Kidney (tissue), 22 donors: ENCODE measurements at regions of chr11 and their contacts with region 1.

Region 1: DNA sequence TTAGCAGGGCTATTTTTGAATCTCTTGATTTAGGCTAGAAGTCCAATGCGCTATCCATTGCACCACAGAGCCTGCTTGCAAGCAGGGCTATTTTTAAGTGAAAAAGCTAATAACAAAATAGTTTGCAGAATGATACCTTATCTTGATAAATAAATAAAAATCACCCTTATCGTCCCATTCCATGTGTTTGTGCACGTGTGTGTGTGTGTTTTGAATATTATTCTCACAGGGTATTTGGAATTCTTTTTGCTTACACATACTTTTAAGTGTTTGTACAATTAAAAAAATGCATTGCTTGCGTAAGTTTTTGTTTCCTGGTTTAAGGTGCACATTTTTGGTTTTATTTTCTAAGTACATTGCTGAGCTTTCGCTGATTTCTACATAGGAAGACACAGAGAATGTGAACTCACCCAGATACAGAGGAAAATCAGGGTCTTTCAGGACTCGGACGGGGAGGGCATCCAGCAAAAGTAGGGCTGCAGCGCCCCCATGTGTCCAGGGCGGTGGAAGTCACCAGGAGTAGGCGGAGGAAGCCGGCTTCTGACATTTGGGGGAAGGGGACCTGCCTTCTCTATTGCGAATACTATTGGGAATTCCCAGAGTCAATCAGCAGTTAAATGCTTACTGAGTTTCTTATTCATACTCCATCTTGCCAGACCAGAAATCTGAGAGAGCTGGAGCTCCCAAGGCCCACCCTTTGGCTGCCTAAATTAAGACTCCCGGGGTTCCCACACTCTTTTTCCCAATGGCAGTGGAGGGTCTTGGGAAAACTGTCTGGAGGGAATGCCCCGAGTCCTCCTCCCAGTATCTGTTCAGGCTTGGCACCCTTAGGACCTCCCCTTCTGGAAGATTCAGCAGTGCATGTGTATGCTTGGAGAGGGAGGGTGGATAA is 27.2 kb downstream of the SLC1A2 start:
- DNase-seq: peak; percentile 84 to 92 (median 85)
- H3K4me3 ChIP-seq: peak overlapping the region in 2 of 3 donors; percentile 15 to 45
- H3K27ac ChIP-seq: no peak overlapping the region
- H3K4me1 ChIP-seq: no peaks in the 10 kb centered on the region
- H3K27me3 ChIP-seq: no peaks in the 10 kb centered on the region
- CTCF ChIP-seq: peak; percentile 83

Region 2: DNA sequence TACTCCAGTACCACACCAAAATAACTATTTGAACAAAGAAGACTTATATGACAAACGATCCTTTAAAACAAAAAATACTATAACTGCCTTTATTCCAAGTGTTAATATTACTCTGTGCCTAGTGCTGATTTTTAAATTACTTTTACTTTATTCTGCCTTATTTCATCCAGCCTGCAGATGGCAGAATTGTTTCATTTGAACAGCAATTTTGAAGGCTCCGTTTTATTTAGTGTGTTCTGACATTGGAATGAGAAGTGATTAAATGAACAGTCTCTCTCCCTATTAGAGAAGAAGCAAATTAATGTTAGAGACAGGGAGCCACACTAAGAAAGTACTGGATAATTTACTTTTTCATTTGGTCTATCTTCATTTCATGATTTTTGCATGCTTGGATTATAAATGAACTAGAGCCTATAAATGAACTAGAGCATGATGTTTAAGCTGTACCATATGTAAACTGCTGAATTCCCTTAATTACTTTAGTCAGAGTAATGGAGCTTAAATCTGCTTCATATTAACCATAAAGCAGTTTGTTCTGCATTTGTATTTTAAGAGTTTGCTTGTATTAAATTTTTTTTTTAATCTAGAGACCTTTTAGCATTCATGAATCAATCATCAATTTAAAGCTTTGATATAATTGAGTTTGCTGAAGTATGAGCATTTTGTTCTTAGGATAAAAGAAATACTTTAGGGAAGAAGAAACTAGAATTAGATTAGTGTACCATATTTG is 465.9 kb before region 1 on chr11:
- intact Hi-C with region 1: loop called (anchors 10 kb)
- DNase-seq: peak in 2 of 5 donors; percentile 65 to 79
- H3K4me3 ChIP-seq: no peak overlapping the region
- H3K27ac ChIP-seq: no peak overlapping the region
- H3K4me1 ChIP-seq: peaks cover 0 to 17% (median 0%) of the 10 kb centered on the region in 3 donors
- H3K27me3 ChIP-seq: no peaks in the 10 kb centered on the region
- CTCF ChIP-seq: peak; percentile 75

Region 3: GRCh38 chr11:35138943-35139721 is 253.0 kb before region 1 on chr11 and contains the start of gene CD44:
- intact Hi-C with region 1: no loop called
- DNase-seq: peak; percentile 46 to 89 (median 60)
- H3K4me3 ChIP-seq: peak within 1 kb of the TSS; percentile 37 to 71 (median 57)
- H3K27ac ChIP-seq: peak within 1 kb of the TSS; percentile 71 to 84
- H3K4me1 ChIP-seq: no peaks in the 10 kb centered on the region
- H3K27me3 ChIP-seq: peaks cover 2% of the 10 kb centered on the region
- CTCF ChIP-seq: no peak
- total RNA-seq, gene CD44: 235 TPM

Region 4: GRCh38 chr11:35214792-35215193 is 177.4 kb before region 1 on chr11:
- intact Hi-C with region 1: no loop called
- DNase-seq: no peak
- H3K4me3 ChIP-seq: no peak overlapping the region
- H3K27ac ChIP-seq: no peak overlapping the region
- H3K4me1 ChIP-seq: no peaks in the 10 kb centered on the region
- H3K27me3 ChIP-seq: no peaks in the 10 kb centered on the region
- CTCF ChIP-seq: no peak